ENCODE measurements at regions of chr6 and their contacts with region 1.

Region 1: DNA sequence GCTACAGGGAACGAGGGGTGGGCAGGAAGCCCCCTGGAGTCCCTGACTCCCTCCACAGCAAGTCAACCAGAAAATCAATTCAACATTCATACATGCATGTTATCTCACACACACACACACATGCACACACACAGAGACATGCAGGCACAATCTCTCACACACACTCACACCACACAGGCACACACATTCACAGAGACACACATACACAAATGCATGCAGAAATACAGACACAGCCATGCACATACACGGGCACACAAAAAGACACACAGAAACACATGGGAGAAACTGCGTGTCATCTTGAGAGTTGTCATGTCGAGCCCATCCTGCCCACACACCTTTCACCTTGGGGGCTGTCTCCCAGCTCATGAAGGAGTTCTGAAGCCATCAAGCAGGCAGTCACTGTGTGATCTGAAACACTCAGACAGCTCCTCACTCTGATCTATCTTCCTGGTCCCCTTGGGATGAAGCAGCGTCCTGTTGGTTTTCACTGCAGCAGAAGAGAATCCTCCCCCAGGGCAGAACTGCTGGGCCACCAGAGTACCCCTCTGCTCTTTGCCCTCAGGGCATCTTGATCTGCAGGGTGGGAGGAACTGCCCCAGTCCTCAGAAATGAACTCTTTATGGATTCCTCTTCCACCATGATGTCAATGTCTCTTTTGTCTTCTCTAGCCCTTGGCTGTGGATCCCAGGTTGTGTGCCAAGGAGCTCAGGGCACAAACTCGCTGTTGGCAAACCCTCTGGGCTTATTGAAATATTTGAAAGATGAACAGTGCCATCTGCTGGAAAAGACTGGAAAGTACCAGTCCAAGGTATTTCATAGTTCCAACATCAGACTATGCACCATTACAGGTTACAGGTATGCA is 8.8 kb downstream of the RAET1L start:
- DNase-seq: peak; percentile 49
- H3K4me3 Mint-ChIP-seq: no peak overlapping the region
- H3K27ac Mint-ChIP-seq: no peak overlapping the region
- H3K4me1 Mint-ChIP-seq: peaks cover 28% of the 10 kb centered on the region
- H3K27me3 Mint-ChIP-seq: peaks cover 75% of the 10 kb centered on the region

Region 2: GRCh38 chr6:149934249-149935156 is 82.1 kb before region 1 on chr6:
- CTCF ChIA-PET with region 1: interaction called, 21 read pairs
- POLR2A ChIA-PET with region 1: interaction called, 4 read pairs
- DNase-seq: peak; percentile 76
- H3K4me3 Mint-ChIP-seq: no peak overlapping the region
- H3K27ac Mint-ChIP-seq: no peak overlapping the region
- H3K4me1 Mint-ChIP-seq: peaks cover 26% of the 10 kb centered on the region
- H3K27me3 Mint-ChIP-seq: peaks cover 92% of the 10 kb centered on the region

Region 3: DNA sequence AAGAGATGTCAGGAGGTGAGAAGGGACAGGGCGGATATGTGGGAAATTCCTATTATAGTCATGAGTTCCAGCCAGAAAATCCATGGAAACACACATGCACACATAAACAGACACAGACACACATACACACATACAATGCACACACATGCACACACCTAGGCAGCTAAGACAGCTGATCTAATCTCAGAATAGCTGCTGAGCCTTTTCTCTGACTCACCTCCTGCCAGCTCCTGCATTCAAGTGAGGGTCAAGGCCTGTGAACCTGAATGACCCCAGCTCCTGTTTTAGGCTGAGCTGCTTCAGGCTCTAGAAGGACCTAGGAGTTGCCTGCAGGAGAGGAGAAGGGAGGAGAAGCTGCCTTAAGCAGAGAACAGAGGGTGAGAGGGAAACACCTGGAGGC is 30.4 kb after region 1 on chr6:
- CTCF ChIA-PET with region 1: no interaction called
- POLR2A ChIA-PET with region 1: no interaction called
- DNase-seq: no peak
- H3K4me3 Mint-ChIP-seq: no peak overlapping the region
- H3K27ac Mint-ChIP-seq: no peak overlapping the region
- H3K4me1 Mint-ChIP-seq: no peaks in the 10 kb centered on the region
- H3K27me3 Mint-ChIP-seq: peaks cover 52% of the 10 kb centered on the region